HEK293 (cell line): ENCODE measurements at regions of chr12 and their contacts with region 1.

Region 1: GRCh38 chr12:7859552-7859951 is 13.2 kb downstream of the SLC2A14 start:
- H3K4me3 ChIP-seq: no peak overlapping the region
- H3K27ac ChIP-seq: no peak overlapping the region
- H3K4me1 ChIP-seq: no peaks in the 10 kb centered on the region
- CTCF ChIP-seq: no peak

Region 2: GRCh38 chr12:7018350-7019042 is 841.1 kb before region 1 on chr12 and contains the start of gene LPCAT3:
- CTCF ChIA-PET with region 1: no interaction called
- POLR2A ChIA-PET with region 1: no interaction called
- H3K4me3 ChIP-seq: peak within 1 kb of the TSS; percentile 89
- H3K27ac ChIP-seq: peak within 1 kb of the TSS; percentile 90
- H3K4me1 ChIP-seq: peaks cover 25% of the 10 kb centered on the region
- CTCF ChIP-seq: peak; percentile 92

Region 3: GRCh38 chr12:7959701-7960121 is 100.2 kb after region 1 on chr12:
- CTCF ChIA-PET with region 1: interaction called, 4 read pairs
- POLR2A ChIA-PET with region 1: interaction called, 12 read pairs
- H3K4me3 ChIP-seq: no peak overlapping the region
- H3K27ac ChIP-seq: no peak overlapping the region
- H3K4me1 ChIP-seq: no peaks in the 10 kb centered on the region
- CTCF ChIP-seq: no peak

Region 4: DNA sequence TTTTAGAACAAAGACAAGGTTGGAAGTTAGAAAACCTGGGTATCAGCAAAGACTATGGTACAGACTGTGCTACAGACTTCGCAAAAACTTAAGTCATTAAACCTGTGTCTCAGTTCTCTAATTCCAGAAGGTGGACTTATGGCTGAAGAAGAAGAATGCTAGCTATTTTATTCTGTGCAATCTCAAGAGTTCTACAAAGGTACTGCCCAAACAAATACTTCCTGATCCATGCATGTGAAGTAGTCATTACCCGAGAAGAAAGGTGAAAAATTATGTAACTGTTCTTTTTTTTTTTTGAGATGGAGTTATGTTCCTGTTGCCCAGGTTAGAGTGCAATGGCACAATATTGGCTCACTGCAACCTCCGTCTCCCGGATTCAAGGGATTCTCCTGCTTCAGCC is 121.9 kb after region 1 on chr12:
- CTCF ChIA-PET with region 1: no interaction called
- POLR2A ChIA-PET with region 1: no interaction called
- H3K4me3 ChIP-seq: no peak overlapping the region
- H3K27ac ChIP-seq: no peak overlapping the region
- H3K4me1 ChIP-seq: no peaks in the 10 kb centered on the region
- CTCF ChIP-seq: no peak

Region 5: DNA sequence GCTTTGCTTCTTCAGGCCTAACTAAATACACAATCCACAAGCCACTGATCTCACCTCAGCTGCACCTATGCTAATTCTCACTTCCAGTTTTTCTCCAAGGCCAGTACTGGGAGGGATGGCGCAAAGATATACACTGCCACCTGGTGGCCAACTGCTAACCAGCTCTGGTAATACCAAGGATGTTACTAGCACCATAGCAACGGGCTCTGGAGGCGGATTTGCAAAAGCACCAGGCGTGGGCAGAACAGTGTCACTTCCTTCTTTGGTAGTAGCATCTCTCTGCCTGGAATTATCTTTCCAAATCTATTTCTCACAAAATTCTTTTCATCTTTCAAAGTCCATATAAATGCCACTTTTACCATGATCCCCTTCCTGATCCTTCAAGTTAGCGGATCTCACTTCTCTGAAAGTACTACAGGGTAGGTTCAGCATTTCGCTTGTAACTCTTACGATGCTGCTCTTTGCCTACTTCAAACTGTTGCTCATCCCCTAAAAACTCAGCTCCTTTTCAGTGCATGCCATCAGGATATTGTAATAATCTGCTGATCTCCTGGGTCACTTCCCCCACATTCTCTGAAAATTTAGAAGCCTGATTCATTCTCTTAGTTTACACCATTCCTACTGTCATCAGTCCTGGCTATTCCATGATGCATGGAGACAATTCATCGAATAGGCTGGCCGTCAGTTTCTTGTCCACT is 135.9 kb after region 1 on chr12:
- CTCF ChIA-PET with region 1: interaction called, 15 read pairs
- POLR2A ChIA-PET with region 1: no interaction called
- H3K4me3 ChIP-seq: no peak overlapping the region
- H3K27ac ChIP-seq: no peak overlapping the region
- H3K4me1 ChIP-seq: no peaks in the 10 kb centered on the region
- CTCF ChIP-seq: peak; percentile 77